ENCODE measurements at regions of chr17 and their contacts with region 1.

Region 1: DNA sequence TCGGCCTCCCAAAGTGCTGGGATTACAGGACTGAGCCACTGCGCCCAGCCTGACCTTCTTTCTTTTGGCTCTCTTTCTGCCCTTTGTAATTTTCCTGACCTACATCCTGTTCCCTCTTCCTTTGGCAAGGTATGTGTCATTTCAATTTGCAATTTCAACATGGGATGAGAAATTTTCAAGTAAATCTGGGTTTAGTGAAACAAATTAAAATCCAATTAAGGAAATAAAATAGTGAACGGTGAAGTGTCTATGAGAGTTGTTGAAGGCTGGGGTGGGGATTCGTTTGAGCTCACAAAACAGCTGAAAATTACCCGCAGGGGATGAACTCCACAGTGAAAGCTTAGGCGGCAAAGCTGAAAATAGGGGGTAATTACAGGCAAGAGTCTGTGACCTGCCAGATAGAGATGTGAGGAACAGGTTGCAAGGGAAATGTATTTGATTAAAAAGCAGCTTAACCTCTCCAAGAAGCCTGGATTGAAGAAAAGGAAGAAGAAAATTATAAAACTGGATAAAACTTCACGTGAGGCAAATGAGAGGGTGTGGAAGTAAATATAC is 277.7 kb downstream of the UTP18 start:
- DNase-seq: no peak
- ATAC-seq: no peak
- H3K4me3 ChIP-seq: no peak overlapping the region
- H3K27ac ChIP-seq: no peak overlapping the region
- H3K4me1 ChIP-seq: no peaks in the 10 kb centered on the region
- H3K27me3 ChIP-seq: no peaks in the 10 kb centered on the region
- CTCF ChIP-seq: no peak
- POLR2A ChIP-seq: no peak
- RAD21 ChIP-seq: no peak

Region 2: DNA sequence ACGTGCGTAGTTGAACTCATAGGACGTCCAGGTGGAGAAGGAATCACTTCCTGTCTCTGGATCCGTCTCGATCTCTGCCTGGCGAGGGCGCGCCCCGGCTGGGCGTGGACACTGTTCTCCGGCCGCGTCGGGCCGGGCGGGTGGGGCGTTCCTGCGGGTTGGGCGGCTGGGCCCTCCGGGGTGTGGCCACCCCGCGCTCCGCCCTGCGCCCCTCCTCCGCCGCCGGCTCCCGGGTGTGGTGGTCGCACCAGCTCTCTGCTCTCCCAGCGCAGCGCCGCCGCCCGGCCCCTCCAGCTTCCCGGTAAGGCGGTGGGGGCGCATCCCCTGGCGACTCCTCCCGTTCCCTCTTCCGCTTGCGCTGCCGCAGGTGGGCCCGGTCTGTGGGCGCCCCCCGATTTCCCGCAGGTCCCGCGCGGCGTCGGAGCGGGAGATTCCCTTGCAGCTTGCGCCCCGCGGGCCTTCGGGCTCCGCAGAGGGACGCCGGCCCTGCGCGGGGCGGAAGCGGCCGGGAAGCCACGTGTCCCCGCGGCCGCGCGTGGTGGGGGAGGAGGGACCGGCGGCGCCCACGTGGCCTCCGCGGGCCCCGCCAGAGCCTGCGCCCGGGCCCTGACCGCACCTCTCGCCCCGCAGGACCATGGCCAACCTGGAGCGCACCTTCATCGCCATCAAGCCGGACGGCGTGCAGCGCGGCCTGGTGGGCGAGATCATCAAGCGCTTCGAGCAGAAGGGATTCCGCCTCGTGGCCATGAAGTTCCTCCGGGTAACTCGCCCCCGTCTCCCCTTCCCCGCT is 371.7 kb before region 1 on chr17 and contains the start of gene NME2:
- CTCF ChIA-PET with region 1: no interaction called
- POLR2A ChIA-PET with region 1: no interaction called
- dilution Hi-C with region 1: no loop called
- in situ Hi-C with region 1: no loop called
- intact Hi-C with region 1: loop called (anchors 5 kb)
- DNase-seq: peak; percentile 77
- ATAC-seq: peak; percentile 95
- H3K4me3 ChIP-seq: peak within 1 kb of the TSS; percentile 87
- H3K27ac ChIP-seq: peak within 1 kb of the TSS; percentile 91
- H3K4me1 ChIP-seq: peaks cover 8% of the 10 kb centered on the region; the same call in 1 of the 2 replicates
- H3K27me3 ChIP-seq: no peaks in the 10 kb centered on the region
- CTCF ChIP-seq: no peak; the same call in 1 of the 2 replicates
- POLR2A ChIP-seq: peak; percentile 72
- RAD21 ChIP-seq: no peak
- total RNA-seq, gene NME2: 824 and 863 TPM in 2 replicates

Region 3: GRCh38 chr17:51298508-51299371 is 239.3 kb before region 1 on chr17:
- CTCF ChIA-PET with region 1: interaction called, 4 read pairs
- POLR2A ChIA-PET with region 1: no interaction called
- dilution Hi-C with region 1: no loop called
- in situ Hi-C with region 1: loop called (anchors 10 kb)
- intact Hi-C with region 1: no loop called
- DNase-seq: peak; percentile 54
- ATAC-seq: peak; percentile 91
- H3K4me3 ChIP-seq: no peak overlapping the region
- H3K27ac ChIP-seq: no peak overlapping the region
- H3K4me1 ChIP-seq: no peaks in the 10 kb centered on the region
- H3K27me3 ChIP-seq: no peaks in the 10 kb centered on the region
- CTCF ChIP-seq: peak; percentile 74
- POLR2A ChIP-seq: no peak
- RAD21 ChIP-seq: peak; percentile 69

Region 4: DNA sequence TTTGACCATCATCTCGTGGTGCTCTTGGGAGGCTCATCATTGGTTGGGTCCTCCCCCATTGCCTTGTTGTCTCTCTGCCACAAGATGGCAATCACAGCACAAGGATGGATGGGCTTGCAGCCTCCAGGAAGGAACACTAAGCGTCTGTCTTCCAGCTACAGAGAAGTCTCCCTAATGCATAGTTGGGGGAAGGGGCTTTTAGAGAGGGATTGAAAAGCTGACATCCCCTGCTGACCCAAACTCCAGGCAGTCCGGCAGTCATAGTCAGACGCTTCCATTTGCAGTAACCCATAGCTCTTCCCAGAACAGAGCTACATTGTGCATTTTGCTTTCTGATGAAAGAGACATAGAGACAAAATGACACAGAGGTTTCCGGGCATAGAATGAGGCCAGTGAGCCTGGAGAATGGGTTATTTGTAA is 166.3 kb before region 1 on chr17:
- CTCF ChIA-PET with region 1: interaction called, 3 read pairs
- POLR2A ChIA-PET with region 1: no interaction called
- dilution Hi-C with region 1: no loop called
- in situ Hi-C with region 1: no loop called
- intact Hi-C with region 1: loop called (anchors 2 kb)
- DNase-seq: peak; percentile 50
- ATAC-seq: peak; percentile 86
- H3K4me3 ChIP-seq: no peak overlapping the region
- H3K27ac ChIP-seq: no peak overlapping the region
- H3K4me1 ChIP-seq: no peaks in the 10 kb centered on the region
- H3K27me3 ChIP-seq: no peaks in the 10 kb centered on the region
- CTCF ChIP-seq: peak; percentile 52
- POLR2A ChIP-seq: no peak
- RAD21 ChIP-seq: peak; percentile 72

Region 5: GRCh38 chr17:51479303-51479702 is 58.8 kb before region 1 on chr17:
- CTCF ChIA-PET with region 1: no interaction called
- POLR2A ChIA-PET with region 1: no interaction called
- dilution Hi-C with region 1: no loop called
- in situ Hi-C with region 1: no loop called
- intact Hi-C with region 1: no loop called
- DNase-seq: no peak
- ATAC-seq: no peak
- H3K4me3 ChIP-seq: no peak overlapping the region
- H3K27ac ChIP-seq: no peak overlapping the region
- H3K4me1 ChIP-seq: no peaks in the 10 kb centered on the region
- H3K27me3 ChIP-seq: no peaks in the 10 kb centered on the region
- CTCF ChIP-seq: no peak
- POLR2A ChIP-seq: no peak
- RAD21 ChIP-seq: no peak

Region 6: GRCh38 chr17:52255347-52255746 is 717.3 kb after region 1 on chr17:
- CTCF ChIA-PET with region 1: no interaction called
- POLR2A ChIA-PET with region 1: no interaction called
- dilution Hi-C with region 1: no loop called
- in situ Hi-C with region 1: no loop called
- intact Hi-C with region 1: no loop called
- DNase-seq: no peak
- ATAC-seq: no peak
- H3K4me3 ChIP-seq: no peak overlapping the region
- H3K27ac ChIP-seq: no peak overlapping the region
- H3K4me1 ChIP-seq: no peaks in the 10 kb centered on the region
- H3K27me3 ChIP-seq: no peaks in the 10 kb centered on the region
- CTCF ChIP-seq: no peak
- POLR2A ChIP-seq: no peak
- RAD21 ChIP-seq: no peak